Astrocyte of the cerebellum (primary cell): ENCODE measurements at regions of chr4 and their contacts with region 1.

Region 1: DNA sequence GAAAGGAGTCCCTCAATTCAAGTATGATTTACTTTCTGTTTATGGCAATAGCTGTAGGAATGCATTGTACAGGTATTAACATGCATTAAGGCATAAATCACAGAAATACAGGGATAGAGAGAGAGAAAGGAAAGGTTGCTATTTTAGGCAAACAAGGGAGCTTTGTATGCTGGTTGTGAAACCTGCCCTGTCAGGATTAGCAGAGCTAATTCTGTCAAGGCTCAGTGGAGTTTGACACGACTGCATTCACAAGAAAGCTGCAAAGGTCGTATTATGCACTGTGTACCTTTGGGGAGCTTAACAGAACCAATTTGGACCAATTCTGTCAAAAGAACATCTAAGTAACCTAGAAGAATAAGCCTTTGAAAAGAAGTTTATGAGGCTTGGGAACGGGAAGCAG is 239.3 kb downstream of the GRIA2 start:
- DNase-seq: no peak
- H3K4me3 ChIP-seq: no peak overlapping the region
- CTCF ChIP-seq: no peak

Region 2: GRCh38 chr4:157421365-157421764 is 38.4 kb before region 1 on chr4:
- in situ Hi-C with region 1: no loop called
- DNase-seq: no peak
- H3K4me3 ChIP-seq: no peak overlapping the region
- CTCF ChIP-seq: no peak

Region 3: DNA sequence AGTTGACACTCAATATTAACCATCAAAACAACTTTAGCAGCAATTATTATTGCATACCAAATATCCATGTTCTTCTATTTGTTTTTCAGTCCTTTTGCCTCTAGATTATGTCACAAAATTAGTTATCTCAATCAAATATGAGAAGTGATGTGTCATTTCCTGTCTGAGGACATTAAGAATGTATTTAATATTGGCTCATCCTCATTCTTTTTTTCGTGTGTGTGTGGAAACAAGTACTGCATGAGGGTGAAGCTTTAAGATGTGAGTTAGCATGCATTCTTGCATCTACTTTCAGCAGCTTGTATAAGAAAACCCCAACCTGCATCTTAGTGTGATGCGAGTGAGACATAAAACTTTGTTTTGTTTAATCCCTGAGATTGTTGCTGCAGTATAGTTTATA is 62.1 kb after region 1 on chr4:
- in situ Hi-C with region 1: loop called (anchors 5 kb)
- DNase-seq: no peak
- H3K4me3 ChIP-seq: no peak overlapping the region
- CTCF ChIP-seq: no peak

Region 4: GRCh38 chr4:157674699-157675098 is 214.9 kb after region 1 on chr4:
- in situ Hi-C with region 1: no loop called
- DNase-seq: no peak
- H3K4me3 ChIP-seq: no peak overlapping the region
- CTCF ChIP-seq: no peak